HAP-1 (cell line): ENCODE measurements at regions of chr16 and their contacts with region 1.

Region 1: GRCh38 chr16:21083729-21084268 is 66.8 kb downstream of the DNAH3 start:
- DNase-seq: peak; percentile 42 to 83
- H3K4me3 ChIP-seq: no peak overlapping the region
- H3K4me1 ChIP-seq: no peaks in the 10 kb centered on the region
- H3K27me3 ChIP-seq: no peaks in the 10 kb centered on the region

Region 2: GRCh38 chr16:20849587-20850390 is 234.0 kb before region 1 on chr16:
- in situ Hi-C with region 1: loop called (anchors 5 kb)
- DNase-seq: peak; percentile 55 to 81
- H3K4me3 ChIP-seq: no peak overlapping the region
- H3K4me1 ChIP-seq: no peaks in the 10 kb centered on the region
- H3K27me3 ChIP-seq: no peaks in the 10 kb centered on the region

Region 3: GRCh38 chr16:21218153-21218552 is 134.4 kb after region 1 on chr16:
- in situ Hi-C with region 1: no loop called
- DNase-seq: no peak
- H3K4me3 ChIP-seq: no peak overlapping the region
- H3K4me1 ChIP-seq: peaks cover 29% of the 10 kb centered on the region
- H3K27me3 ChIP-seq: no peaks in the 10 kb centered on the region